ENCODE measurements at regions of chr10 and their contacts with region 1.

Region 1: DNA sequence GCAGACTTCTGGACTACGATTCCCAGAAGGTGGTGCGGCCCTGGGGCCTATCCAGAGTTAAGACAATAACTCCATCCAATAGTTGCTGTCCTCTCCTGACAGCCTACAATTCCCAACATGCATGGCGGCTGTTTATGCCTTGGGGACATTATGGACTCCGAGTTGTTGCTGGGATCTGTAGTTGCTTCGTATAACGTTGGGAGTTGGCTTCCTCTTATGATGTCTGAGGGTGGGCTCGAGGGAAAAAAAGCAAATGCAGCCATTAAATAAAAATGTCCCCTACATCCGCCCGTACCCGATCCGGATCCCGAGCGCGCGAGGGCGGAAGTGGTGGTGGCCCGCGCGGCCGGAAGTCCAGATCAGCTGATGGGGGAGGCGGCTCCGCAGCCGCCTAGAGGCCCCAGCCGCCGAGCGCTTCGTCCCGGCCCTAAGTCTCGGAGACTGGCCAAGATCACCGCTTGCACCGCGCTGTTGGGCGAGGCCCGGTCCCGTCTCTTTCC is at the start of gene ZSWIM8:
- DNase-seq: peak; percentile 93
- ATAC-seq: peak; percentile 88
- H3K4me3 Mint-ChIP-seq: peak within 1 kb of the TSS; percentile 84
- H3K27ac Mint-ChIP-seq: peak within 1 kb of the TSS; percentile 100
- H3K4me1 Mint-ChIP-seq: peaks cover 37% of the 10 kb centered on the region
- H3K27me3 Mint-ChIP-seq: no peaks in the 10 kb centered on the region
- CTCF ChIP-seq: no peak
- total RNA-seq, gene ZSWIM8: 30.0 to 41.0 TPM

Region 2: DNA sequence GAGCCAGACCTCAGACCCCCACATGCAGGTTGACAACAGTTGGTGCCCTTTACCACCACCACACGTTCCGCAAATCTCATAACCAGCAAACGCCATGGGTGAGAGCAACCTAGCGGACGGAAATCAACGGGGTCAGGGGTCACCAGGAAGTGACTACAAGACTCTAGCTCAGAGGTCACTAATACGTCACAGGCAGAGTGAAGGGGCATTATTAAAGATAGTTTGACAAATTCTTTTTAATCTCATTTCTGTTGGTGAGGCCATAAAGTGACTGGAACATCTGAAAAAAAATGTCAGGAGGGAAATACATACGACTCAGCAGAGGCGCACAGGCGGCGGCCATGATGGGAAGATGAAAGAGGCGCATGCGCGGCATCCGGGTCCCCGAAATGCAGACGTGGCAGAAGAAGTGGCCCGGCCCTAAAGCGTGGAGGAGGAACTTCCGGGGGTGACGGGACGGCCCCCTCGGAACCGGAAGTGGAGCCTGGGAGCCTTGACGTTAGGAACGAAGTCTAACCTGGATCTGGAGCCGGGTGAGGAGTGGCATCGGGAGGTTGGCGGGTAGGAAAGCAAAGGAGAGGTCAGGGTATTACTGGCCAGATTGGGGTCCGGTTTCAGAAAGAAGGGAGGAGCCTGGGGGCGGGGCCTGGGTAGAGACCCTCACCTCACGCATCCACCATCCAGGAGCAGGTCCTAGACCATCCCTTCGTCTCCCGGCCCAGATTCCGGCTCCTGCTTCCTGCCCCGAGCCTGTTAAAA is 41.2 kb before region 1 on chr10 and contains the start of gene SEC24C:
- CTCF ChIA-PET with region 1: interaction called, 4 read pairs
- POLR2A ChIA-PET with region 1: interaction called, 3 read pairs
- intact Hi-C with region 1: loop called (anchors 5 kb)
- DNase-seq: peak; percentile 97
- ATAC-seq: peak; percentile 91
- H3K4me3 Mint-ChIP-seq: peak within 1 kb of the TSS; percentile 97
- H3K27ac Mint-ChIP-seq: peak within 1 kb of the TSS; percentile 100
- H3K4me1 Mint-ChIP-seq: peaks cover 36% of the 10 kb centered on the region
- H3K27me3 Mint-ChIP-seq: no peaks in the 10 kb centered on the region
- CTCF ChIP-seq: no peak
- total RNA-seq, gene SEC24C: 87.5 to 88.7 TPM

Region 3: GRCh38 chr10:73772280-73773151 is 12.8 kb before region 1 on chr10:
- CTCF ChIA-PET with region 1: interaction called, 30 read pairs
- POLR2A ChIA-PET with region 1: interaction called, 112 read pairs
- intact Hi-C with region 1: no loop called
- DNase-seq: peak; percentile 84
- ATAC-seq: peak; percentile 75
- H3K4me3 Mint-ChIP-seq: peak overlapping the region; percentile 89
- H3K27ac Mint-ChIP-seq: peak overlapping the region; percentile 95
- H3K4me1 Mint-ChIP-seq: peaks cover 38% of the 10 kb centered on the region
- H3K27me3 Mint-ChIP-seq: no peaks in the 10 kb centered on the region
- CTCF ChIP-seq: no peak

Region 4: DNA sequence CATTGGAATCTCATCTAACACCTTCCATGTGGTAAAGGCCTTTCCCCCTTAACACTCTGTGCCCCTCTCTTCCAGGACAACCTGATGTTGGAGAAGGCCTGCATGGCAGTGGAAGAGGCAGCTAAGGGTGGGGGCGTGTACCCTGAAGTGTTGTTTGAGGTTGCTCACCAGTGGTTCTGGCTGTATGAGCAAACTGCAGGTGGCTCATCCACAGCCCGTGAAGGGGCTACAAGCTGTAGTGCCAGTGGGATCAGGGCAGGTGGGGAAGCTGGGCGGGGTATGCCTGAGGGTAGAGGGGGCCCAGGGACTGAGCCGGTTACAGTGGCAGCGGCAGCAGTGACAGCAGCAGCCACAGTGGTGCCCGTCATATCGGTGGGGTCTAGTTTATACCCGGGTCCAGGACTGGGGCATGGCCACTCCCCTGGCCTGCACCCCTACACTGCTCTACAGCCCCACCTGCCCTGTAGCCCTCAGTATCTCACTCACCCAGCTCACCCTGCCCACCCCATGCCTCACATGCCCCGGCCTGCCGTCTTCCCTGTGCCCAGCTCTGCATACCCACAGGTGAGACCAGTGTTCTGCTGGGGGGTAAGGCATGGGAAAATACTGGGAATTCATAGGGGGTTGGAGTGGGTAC is 13.8 kb after region 1 on chr10:
- CTCF ChIA-PET with region 1: interaction called, 4 read pairs
- POLR2A ChIA-PET with region 1: interaction called, 23 read pairs
- intact Hi-C with region 1: no loop called
- DNase-seq: no peak
- ATAC-seq: peak; percentile 17
- H3K4me3 Mint-ChIP-seq: no peak overlapping the region
- H3K27ac Mint-ChIP-seq: no peak overlapping the region
- H3K4me1 Mint-ChIP-seq: peaks cover 11% of the 10 kb centered on the region
- H3K27me3 Mint-ChIP-seq: no peaks in the 10 kb centered on the region
- CTCF ChIP-seq: no peak

Region 5: DNA sequence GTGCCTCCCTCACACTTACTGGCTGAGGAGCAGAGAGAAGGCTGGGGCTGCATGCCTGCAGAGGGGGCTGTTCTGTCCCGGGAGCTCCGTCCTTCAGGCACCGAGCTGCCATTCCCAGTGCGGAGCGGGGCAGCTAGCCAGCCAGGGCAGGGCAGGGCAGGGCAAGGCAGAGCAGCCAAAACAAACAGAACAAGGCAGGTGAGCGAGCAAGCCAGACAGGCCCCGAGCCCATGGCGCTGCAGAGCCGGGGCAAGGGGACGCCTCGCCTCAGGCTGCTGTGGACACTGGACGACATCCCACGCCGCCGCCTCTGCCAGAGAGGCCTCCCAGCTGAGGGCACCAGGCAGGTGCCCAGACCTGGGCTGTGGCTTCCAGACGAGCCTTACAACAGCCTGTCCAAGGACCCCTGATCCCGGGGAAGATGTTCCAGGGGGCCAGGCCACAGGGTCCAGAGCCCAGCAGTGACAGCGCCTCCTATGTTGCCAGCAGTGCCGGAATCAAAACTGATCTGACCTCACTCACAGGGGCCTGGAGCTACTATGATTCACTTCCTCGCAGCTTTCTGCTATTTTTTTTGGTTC is 34.3 kb after region 1 on chr10:
- CTCF ChIA-PET with region 1: no interaction called
- POLR2A ChIA-PET with region 1: no interaction called
- intact Hi-C with region 1: no loop called
- DNase-seq: no peak
- ATAC-seq: no peak
- H3K4me3 Mint-ChIP-seq: no peak overlapping the region
- H3K27ac Mint-ChIP-seq: no peak overlapping the region
- H3K4me1 Mint-ChIP-seq: no peaks in the 10 kb centered on the region
- H3K27me3 Mint-ChIP-seq: no peaks in the 10 kb centered on the region
- CTCF ChIP-seq: no peak

Region 6: GRCh38 chr10:73865459-73866442 is 80.5 kb after region 1 on chr10:
- CTCF ChIA-PET with region 1: no interaction called
- POLR2A ChIA-PET with region 1: no interaction called
- intact Hi-C with region 1: no loop called
- DNase-seq: peak; percentile 64
- ATAC-seq: peak; percentile 84
- H3K4me3 Mint-ChIP-seq: peak overlapping the region; percentile 76
- H3K27ac Mint-ChIP-seq: peak overlapping the region; percentile 99
- H3K4me1 Mint-ChIP-seq: peaks cover 69% of the 10 kb centered on the region
- H3K27me3 Mint-ChIP-seq: no peaks in the 10 kb centered on the region
- CTCF ChIP-seq: no peak

Measured in activated CD8-positive, alpha-beta T cell treated with anti-CD3 and anti-CD28 coated beads for 36 hours (primary cell).